ENCODE measurements at regions of chr10 and their contacts with region 1.

Region 1: GRCh38 chr10:74213571-74214162 is 62.6 kb downstream of the ADK start:
- DNase-seq: peak; percentile 61 to 73 (median 71)
- H3K4me3 ChIP-seq: no peak overlapping the region
- H3K27ac ChIP-seq: no peak overlapping the region
- H3K4me1 ChIP-seq: no peaks in the 10 kb centered on the region
- H3K27me3 ChIP-seq: no peaks in the 10 kb centered on the region

Region 2: GRCh38 chr10:74123081-74123480 is 90.6 kb before region 1 on chr10:
- CTCF ChIA-PET with region 1: interaction called, 24 read pairs
- POLR2A ChIA-PET with region 1: no interaction called
- DNase-seq: no peak
- H3K4me3 ChIP-seq: no peak overlapping the region
- H3K27ac ChIP-seq: no peak overlapping the region
- H3K4me1 ChIP-seq: no peaks in the 10 kb centered on the region
- H3K27me3 ChIP-seq: no peaks in the 10 kb centered on the region

Region 3: GRCh38 chr10:74156919-74157289 is 56.8 kb before region 1 on chr10:
- CTCF ChIA-PET with region 1: interaction called, 16 read pairs
- POLR2A ChIA-PET with region 1: no interaction called
- DNase-seq: peak in 2 of 3 donors; percentile 72 to 87
- H3K4me3 ChIP-seq: peak overlapping the region in 1 of 7 experiments; percentile 2
- H3K27ac ChIP-seq: no peak overlapping the region
- H3K4me1 ChIP-seq: peaks cover 4 to 30% (median 14%) of the 10 kb centered on the region in 4 experiments
- H3K27me3 ChIP-seq: no peaks in the 10 kb centered on the region

Region 4: GRCh38 chr10:74189999-74190421 is 23.7 kb before region 1 on chr10:
- CTCF ChIA-PET with region 1: interaction called, 22 read pairs
- POLR2A ChIA-PET with region 1: no interaction called
- DNase-seq: peak; percentile 36 to 79 (median 67)
- H3K4me3 ChIP-seq: peak overlapping the region in 6 of 7 experiments; percentile 4 to 64 (median 34)
- H3K27ac ChIP-seq: peak overlapping the region; percentile 46 to 70
- H3K4me1 ChIP-seq: peaks cover 2 to 30% (median 12%) of the 10 kb centered on the region in 4 experiments
- H3K27me3 ChIP-seq: no peaks in the 10 kb centered on the region

Region 5: GRCh38 chr10:74234569-74234968 is 20.9 kb after region 1 on chr10:
- CTCF ChIA-PET with region 1: interaction called, 29 read pairs
- POLR2A ChIA-PET with region 1: no interaction called
- DNase-seq: peak in 2 of 3 donors; percentile 23 to 26
- H3K4me3 ChIP-seq: no peak overlapping the region
- H3K27ac ChIP-seq: no peak overlapping the region
- H3K4me1 ChIP-seq: peaks cover 0 to 20% (median 8%) of the 10 kb centered on the region in 4 experiments
- H3K27me3 ChIP-seq: no peaks in the 10 kb centered on the region

Region 6: GRCh38 chr10:74490551-74490950 is 276.9 kb after region 1 on chr10:
- CTCF ChIA-PET with region 1: no interaction called
- POLR2A ChIA-PET with region 1: no interaction called
- DNase-seq: no peak
- H3K4me3 ChIP-seq: no peak overlapping the region
- H3K27ac ChIP-seq: no peak overlapping the region
- H3K4me1 ChIP-seq: no peaks in the 10 kb centered on the region
- H3K27me3 ChIP-seq: no peaks in the 10 kb centered on the region

Measured in common myeloid progenitor, CD34-positive (primary cell).